ENCODE measurements at regions of chr12 and their contacts with region 1.

Region 1: GRCh38 chr12:49507139-49507538 is 31.7 kb upstream of the KCNH3 start:
- DNase-seq: no peak
- CTCF ChIP-seq: no peak

Region 2: DNA sequence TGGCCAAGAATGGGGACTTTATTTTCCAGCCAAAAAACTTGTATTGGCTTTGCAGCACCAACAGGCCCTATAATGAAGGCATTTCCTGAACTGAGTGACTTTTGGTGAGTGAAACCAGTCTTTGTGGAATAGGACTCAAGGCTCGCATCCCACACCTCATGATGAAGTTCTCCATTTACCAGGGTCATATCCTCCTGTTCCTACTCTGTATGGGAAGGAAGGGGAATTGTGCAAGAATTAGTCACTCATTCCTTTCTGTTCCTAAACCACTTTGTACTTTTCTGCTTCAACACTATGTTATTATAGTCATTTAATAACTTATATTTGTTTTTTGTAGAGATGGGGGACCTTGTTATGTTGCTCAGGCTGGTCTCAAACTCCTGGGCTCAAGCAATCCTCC is 142.2 kb before region 1 on chr12:
- in situ Hi-C with region 1: loop called (anchors 5 kb)
- DNase-seq: no peak
- CTCF ChIP-seq: no peak

Measured in GM13976 (cell line).